ENCODE measurements at regions of chr11 and their contacts with region 1.

Region 1: GRCh38 chr11:37973941-37974340 is 1375.9 kb upstream of the RAG2 start:
- DNase-seq: peak; percentile 29
- H3K4me3 ChIP-seq: no peak overlapping the region
- H3K27ac ChIP-seq: no peak overlapping the region
- H3K4me1 ChIP-seq: peaks cover 21% of the 10 kb centered on the region
- H3K27me3 ChIP-seq: no peaks in the 10 kb centered on the region
- CTCF ChIP-seq: no peak
- POLR2A ChIP-seq: no peak

Region 2: DNA sequence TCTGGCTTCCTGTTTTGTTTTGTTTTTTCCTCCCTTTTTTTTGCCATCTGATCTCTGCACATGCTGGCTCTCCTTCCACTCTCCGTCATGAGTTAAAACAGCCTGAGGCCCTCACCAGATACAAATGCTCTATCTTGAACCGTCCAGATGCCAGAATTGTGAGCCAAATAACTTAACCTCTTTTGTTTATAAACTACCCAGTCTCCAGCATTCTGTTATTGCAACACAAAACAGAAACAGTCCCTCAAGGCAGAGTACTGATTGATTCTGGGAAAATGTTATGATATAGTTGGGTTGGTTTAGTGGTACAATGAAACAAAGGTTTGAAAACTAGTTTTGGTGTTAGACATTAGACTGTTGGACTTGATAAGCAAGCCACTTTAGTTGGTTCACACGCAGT is 14.1 kb after region 1 on chr11:
- CTCF ChIA-PET with region 1: interaction called, 5 read pairs
- POLR2A ChIA-PET with region 1: no interaction called
- dilution Hi-C with region 1: no loop called
- intact Hi-C with region 1: loop called (anchors 2 kb)
- DNase-seq: peak; percentile 66
- H3K4me3 ChIP-seq: no peak overlapping the region
- H3K27ac ChIP-seq: no peak overlapping the region
- H3K4me1 ChIP-seq: peaks cover 25% of the 10 kb centered on the region
- H3K27me3 ChIP-seq: no peaks in the 10 kb centered on the region
- CTCF ChIP-seq: no peak
- POLR2A ChIP-seq: no peak

Measured in endothelial cell of umbilical vein (primary cell).